Activated B cell treated with CpG ODN at 0.5 μM for 24 hours (primary cell): ENCODE measurements at regions of chr15 and their contacts with region 1.

Region 1: GRCh38 chr15:72599855-72600464 is 54.5 kb upstream of the GOLGA6B start:
- DNase-seq: no peak
- ATAC-seq: no peak
- H3K4me3 Mint-ChIP-seq: no peak overlapping the region
- H3K27ac Mint-ChIP-seq: no peak overlapping the region
- H3K4me1 Mint-ChIP-seq: no peaks in the 10 kb centered on the region
- H3K27me3 Mint-ChIP-seq: no peaks in the 10 kb centered on the region
- CTCF ChIP-seq: no peak

Region 2: GRCh38 chr15:72585476-72586082 is 14.4 kb before region 1 on chr15:
- CTCF ChIA-PET with region 1: interaction called, 14 read pairs
- POLR2A ChIA-PET with region 1: no interaction called
- intact Hi-C with region 1: no loop called
- DNase-seq: no peak
- ATAC-seq: no peak
- H3K4me3 Mint-ChIP-seq: no peak overlapping the region
- H3K27ac Mint-ChIP-seq: no peak overlapping the region
- H3K4me1 Mint-ChIP-seq: no peaks in the 10 kb centered on the region
- H3K27me3 Mint-ChIP-seq: no peaks in the 10 kb centered on the region
- CTCF ChIP-seq: no peak

Region 3: DNA sequence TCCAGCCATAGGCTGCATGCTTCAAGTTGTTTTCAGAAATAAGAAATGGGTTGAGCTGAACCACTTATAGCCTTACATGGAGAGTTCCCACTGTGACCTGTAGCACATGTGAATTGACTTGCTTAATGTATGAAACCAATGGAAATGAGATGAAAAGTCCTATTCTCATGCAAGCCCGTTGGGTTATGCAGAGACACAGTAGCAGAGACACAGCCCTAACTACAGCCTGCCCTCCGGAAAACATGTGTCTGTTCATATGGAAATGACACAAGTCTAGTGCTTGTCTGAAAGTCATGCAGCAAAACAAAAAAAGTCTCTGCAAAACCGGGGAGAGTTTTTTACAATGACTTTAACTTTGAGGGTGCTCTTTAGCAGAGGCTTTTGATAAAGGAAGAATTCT is 71.6 kb after region 1 on chr15:
- CTCF ChIA-PET with region 1: interaction called, 14 read pairs
- POLR2A ChIA-PET with region 1: no interaction called
- intact Hi-C with region 1: loop called (anchors 10 kb)
- DNase-seq: no peak
- ATAC-seq: no peak
- H3K4me3 Mint-ChIP-seq: no peak overlapping the region
- H3K27ac Mint-ChIP-seq: no peak overlapping the region
- H3K4me1 Mint-ChIP-seq: peaks cover 7% of the 10 kb centered on the region
- H3K27me3 Mint-ChIP-seq: peaks cover 4% of the 10 kb centered on the region
- CTCF ChIP-seq: no peak